Common myeloid progenitor, CD34-positive (primary cell): ENCODE measurements at regions of chr19 and their contacts with region 1.

Region 1: DNA sequence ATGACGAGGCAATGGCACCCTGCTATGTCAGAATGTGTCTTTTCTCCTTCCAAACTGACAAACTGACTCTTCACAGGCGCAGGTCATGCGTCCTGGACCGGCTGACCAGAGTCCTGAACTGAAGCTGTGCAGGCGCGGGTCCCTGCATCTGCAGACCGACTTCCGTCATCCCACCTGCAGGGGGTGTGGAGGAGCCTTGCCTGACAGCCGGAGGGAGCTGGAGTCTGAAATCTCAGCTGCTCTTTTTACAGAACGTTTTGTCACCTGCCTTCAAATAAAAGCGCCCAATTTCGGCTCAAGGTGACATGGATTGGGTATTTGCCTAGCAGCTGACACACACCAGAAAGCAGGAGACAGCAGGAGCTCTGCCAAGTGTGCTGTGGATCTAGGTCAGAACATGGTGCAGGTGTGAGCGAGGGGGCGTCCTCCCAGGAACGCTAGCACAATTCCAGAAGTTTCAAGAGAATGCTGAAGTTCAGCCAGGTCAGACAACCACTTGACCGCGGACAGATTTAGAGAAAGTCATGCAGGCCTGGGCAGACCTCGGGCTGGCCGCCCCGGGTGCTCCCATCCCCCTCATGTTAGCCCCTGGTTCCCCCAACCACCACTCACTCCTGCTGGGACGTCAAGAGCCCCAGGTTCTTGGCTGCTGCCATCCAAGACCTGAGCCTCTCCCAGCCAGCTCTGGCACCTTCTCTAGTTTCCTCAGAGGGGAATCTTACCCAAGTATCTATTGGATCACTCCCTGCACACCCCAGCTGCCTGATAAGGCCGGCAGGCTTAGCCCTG is 32.8 kb downstream of the ELL start:
- DNase-seq: peak; percentile 19 to 35 (median 35)
- H3K4me3 ChIP-seq: no peak overlapping the region
- H3K27ac ChIP-seq: no peak overlapping the region
- H3K4me1 ChIP-seq: peaks cover 0 to 18% (median 6%) of the 10 kb centered on the region in 4 experiments
- H3K27me3 ChIP-seq: no peaks in the 10 kb centered on the region

Region 2: DNA sequence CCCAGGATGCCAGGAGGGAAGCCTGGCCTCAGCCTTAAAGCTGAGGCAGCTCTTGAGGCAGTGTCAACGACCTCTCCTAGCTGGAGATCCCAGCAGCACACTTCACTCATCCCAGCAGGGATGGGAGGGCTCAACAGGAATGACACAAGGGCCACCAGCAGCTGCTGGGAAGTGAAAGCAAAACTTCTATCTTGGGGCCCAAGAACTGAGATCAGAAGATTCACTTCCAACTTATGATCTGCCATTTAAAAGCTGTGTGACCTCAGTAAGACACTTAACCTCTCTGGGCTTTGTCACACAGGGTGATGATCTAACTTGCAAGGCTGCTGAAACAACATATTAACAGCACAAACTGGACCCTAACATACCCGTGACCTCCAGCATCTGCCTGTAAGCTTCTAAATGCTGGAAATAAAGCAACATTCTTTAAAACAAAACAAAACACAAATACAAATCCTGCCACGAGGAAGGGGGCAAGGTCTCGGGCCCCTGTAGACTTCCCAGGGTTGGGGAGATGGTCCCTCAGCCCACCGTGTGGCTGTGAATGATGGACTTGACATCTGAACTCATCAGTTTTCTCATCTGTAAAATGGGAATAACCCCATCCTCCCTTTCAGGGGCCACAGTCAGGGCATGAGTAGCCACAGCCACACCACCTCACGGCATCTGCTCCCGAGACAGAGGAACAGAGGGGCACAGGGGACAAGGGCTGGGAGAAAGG is 10.2 kb after region 1 on chr19:
- CTCF ChIA-PET with region 1: interaction called, 13 read pairs
- POLR2A ChIA-PET with region 1: interaction called, 3 read pairs
- DNase-seq: no peak
- H3K4me3 ChIP-seq: no peak overlapping the region
- H3K27ac ChIP-seq: no peak overlapping the region
- H3K4me1 ChIP-seq: peaks cover 5 to 72% (median 62%) of the 10 kb centered on the region in 4 experiments
- H3K27me3 ChIP-seq: no peaks in the 10 kb centered on the region

Region 3: DNA sequence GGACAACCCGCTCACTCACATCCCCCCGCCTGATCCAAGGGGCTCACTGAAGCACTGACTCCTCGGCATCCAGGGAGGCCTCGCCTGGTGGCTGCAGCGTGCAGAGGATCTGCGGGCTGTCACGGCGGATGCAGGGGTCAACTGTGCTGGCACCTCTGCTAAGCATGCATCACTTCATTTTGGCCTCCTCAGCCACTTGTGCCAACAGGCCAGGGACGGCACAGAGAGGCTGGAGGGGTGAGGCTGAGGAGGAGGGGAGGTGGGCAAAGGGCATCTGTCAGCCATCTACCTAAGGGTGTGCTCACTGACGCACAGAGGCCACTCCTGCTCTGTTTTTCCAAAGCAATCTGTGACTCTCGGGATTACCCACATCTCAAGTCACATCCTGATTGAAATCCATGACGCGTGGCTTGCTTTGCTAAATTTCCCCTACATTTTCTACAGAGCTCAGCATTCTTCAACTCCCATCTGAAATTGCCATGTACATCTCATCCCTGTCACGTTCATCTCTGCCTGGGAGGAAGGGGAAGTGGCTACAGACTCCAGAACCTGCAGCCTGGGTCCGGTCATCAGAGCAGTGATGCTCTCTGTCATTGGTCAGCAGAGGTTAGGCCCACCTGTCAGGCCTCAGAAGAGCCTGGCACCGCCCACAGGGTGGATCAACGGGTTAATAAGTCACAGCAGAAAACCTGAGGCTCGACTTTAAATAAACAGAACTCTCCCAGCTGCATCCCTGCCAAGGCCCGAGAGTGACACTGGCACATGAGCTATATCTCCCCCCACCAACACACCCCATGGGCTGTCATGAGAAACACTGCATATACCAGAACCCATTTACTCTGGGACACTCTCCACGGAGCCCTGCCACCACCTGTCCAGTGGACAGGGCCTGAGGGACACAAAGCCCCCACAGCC is 15.2 kb after region 1 on chr19:
- CTCF ChIA-PET with region 1: interaction called, 13 read pairs
- POLR2A ChIA-PET with region 1: no interaction called
- DNase-seq: no peak
- H3K4me3 ChIP-seq: no peak overlapping the region
- H3K27ac ChIP-seq: no peak overlapping the region
- H3K4me1 ChIP-seq: peaks cover 5 to 88% (median 80%) of the 10 kb centered on the region in 4 experiments
- H3K27me3 ChIP-seq: no peaks in the 10 kb centered on the region

Region 4: DNA sequence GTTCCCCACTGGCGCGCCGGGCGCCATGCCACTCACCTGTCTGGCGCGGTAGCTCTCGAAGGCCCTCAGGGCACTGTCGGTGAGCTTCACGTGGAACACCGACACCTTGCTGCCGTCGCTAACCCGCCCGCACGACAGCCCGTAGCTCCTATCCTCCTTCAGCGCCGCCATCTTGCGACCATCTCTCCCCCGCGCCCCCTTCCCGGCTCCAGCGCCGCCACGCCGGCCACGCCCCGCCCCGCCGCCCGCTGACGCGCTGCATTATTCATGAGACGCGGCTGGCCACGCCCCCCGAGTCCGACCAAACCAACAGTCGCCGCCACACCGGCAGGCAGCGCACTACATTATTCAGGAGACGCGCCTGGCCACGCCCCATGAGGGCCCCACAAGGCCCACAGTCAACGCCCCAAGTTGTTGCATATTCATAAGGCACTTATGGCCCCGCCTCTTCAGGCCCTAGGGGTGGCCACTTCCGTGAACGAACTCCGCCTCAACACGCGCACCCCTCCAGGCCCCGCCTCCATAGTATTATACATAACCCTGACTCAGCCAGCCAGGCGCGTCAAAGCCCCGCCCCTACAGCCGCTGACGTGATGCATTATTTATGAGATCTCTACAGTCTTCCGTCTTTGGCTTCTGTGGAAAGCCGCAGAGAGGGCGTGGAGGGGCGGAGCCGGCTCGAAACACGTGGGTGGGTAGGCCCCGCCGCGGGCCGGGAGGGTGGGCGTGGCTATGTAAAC is 33.0 kb after region 1 on chr19 and contains the start of gene ELL:
- CTCF ChIA-PET with region 1: interaction called, 25 read pairs
- POLR2A ChIA-PET with region 1: no interaction called
- DNase-seq: peak; percentile 100
- H3K4me3 ChIP-seq: peak within 1 kb of the TSS; percentile 86 to 98 (median 96)
- H3K27ac ChIP-seq: peak within 1 kb of the TSS; percentile 94 to 95
- H3K4me1 ChIP-seq: peaks cover 0 to 27% (median 15%) of the 10 kb centered on the region in 4 experiments
- H3K27me3 ChIP-seq: no peaks in the 10 kb centered on the region

Region 5: DNA sequence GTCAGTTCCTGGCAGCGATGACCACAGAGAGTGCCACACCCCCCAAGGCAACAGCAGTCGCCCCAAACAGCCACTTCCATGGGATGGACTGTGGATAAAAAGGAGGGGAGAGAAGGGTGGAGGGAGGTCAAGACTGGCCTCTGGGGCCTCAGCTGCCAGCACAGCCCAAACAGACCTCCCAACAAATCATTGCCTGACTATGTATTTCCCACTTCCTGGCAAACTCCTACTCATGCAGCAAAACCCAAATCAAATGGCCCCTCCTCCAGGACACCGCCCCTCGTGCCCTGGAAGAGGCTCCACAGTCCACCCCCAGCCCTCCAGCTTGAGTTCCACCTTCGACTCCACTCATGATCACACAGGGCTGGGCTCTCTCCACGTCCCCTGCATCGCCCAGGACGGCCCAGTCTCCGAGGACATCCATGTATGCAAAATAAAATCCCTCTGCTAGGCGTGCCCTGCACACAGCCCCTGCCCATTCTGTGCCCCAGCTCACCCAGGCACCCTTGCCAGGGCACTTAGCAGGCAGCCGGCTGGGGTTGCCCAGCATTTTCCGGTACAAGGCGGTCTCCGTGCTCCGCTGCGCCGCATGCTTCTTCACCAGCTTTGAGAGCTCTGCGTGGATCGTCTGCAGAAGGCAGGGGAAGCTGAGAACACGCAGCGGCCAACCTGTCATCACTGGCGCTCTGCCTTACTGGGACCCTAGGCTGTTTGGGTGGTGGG is 43.3 kb after region 1 on chr19:
- CTCF ChIA-PET with region 1: no interaction called
- POLR2A ChIA-PET with region 1: no interaction called
- DNase-seq: no peak
- H3K4me3 ChIP-seq: no peak overlapping the region
- H3K27ac ChIP-seq: no peak overlapping the region
- H3K4me1 ChIP-seq: no peaks in the 10 kb centered on the region
- H3K27me3 ChIP-seq: no peaks in the 10 kb centered on the region